HEK293T (cell line): ENCODE measurements at regions of chr6 and their contacts with region 1.

Region 1: DNA sequence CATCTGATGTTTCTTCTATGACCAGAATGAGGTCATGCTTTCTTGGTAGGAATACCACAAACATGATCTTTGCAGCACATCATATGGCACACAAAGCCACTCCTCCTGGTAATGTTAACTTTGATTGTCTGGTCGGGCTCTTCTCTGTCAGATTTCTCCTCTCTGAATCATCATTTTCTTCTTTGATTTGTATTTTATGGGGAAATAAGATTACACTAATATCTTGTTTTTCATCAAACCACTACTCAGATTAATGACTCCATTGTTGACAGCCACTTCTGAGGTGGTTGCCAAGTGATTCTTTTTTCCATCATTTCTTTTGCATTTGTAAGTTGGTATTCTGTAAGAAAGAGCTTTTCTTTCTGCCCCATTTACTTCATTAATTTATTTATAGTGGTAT is 29.5 kb downstream of the TRMT11 start:
- DNase-seq: no peak

Region 2: DNA sequence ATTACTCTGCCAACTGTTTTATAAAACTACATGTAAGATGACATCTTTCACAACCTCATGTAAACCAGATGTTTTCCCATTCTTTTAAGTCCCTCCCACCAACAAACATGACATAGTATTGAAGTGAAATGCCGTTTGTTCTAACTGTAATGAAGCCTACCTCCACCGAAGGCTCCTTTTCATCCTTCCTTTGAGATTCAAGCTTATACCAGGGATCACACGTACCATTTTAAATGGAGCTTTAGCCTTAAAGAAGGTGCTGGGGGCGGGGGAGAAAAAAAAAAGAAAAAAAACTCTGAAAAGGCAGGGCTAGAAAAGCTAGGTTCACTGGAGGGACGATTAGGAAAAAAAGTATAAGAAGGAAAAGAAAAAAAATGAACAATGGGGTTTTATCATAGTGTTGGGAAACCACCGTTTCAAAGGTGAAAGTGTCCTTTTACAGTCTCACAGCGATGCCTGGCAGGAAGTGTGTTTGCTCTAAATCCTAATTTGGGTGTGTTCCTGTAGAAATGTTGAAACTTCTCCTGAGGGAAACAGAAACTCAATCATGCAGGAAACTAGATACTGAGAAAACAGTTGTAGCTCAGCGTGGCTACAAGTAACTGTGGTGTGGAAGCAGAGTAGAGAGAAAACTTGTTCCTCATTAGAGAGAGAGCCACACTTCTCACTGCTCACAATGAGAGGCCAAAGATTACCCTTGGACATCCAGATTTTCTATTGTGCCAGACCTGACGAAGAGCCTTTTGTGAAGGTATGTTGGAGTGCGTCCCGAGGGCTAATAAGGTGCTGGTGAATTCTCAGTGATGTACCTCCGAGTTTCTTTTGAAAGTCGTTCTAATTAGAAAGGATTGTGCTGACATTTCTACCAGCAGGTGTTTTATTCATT is 96.9 kb before region 1 on chr6:
- CTCF ChIA-PET with region 1: no interaction called
- POLR2A ChIA-PET with region 1: no interaction called
- DNase-seq: peak; percentile 54

Region 3: DNA sequence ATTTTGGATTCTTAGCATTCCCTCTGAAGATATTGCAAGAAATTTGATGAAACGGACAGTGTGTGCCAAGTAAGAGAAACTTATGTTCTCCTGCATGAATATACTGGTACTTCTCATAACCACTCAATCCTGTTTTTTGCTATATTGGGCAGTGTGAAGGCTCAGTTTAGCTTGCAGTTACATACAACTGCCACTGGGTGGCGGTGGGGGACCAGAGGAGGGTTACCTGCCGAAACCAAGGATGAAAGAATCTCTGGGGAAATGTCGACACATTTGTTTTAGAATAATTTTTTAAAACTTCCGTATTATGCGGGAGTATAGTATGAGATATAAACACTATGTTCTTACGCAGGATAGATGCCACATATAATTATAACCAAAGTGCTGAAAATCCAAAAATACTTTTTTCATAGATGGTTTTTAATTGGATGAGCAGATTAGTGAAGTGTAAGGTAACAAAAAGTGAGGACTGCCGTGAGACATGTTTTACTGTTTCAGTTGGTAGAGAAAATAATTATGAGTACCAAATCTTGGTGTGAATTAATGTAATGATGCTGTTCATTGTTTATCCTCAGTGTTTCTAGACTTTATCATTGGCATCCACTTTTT is 19.8 kb before region 1 on chr6:
- CTCF ChIA-PET with region 1: interaction called, 11 read pairs
- POLR2A ChIA-PET with region 1: no interaction called
- DNase-seq: peak; percentile 81